Right ventricle myocardium inferior (tissue), 1 donor: ENCODE measurements at regions of chr18 and their contacts with region 1.

Region 1: DNA sequence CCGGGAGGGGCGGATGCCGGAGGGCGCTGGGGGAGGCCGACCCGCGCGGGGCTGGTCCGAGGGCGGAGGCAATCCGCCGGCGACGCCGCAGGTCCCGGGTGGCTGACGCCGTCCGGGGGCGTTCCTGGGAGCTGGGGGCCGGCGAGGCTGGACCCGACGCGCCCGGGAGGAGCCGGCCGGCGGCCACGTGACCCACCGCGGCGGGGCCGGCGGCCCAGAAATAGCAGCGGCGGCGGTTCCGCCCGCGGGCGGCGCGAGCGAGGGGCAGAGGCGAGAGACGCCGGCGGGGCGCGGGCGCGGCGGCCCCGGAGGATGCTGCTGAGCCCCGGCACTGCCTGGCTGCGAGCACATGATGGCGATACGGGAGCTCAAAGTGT is at the start of gene RAB31:
- DNase-seq: peak; percentile 91
- ATAC-seq: peak; percentile 94
- total RNA-seq, gene RAB31: 11.7 TPM

Region 2: DNA sequence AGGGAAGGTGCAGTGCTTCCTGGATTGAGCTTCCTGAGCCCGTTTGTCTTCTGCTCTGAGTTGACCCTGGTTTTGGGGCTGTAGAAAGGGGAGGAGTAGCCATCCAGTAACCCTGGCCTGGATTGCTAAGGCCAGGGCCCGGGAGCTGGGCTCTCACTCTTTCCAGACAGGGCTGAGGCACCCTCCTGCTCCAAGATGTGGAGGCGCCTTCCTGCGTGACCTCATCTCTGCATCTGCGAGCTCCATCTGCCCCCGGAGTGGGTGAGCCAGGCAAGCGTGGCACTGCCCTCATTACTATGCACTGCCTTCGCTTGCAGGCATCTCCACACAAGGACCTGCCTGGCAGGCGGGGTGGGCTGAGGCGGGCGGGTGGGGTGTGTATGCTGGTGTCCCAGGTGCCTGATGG is 58.0 kb after region 1 on chr18:
- intact Hi-C with region 1: loop called (anchors 10 kb)
- DNase-seq: no peak
- ATAC-seq: no peak

Region 3: DNA sequence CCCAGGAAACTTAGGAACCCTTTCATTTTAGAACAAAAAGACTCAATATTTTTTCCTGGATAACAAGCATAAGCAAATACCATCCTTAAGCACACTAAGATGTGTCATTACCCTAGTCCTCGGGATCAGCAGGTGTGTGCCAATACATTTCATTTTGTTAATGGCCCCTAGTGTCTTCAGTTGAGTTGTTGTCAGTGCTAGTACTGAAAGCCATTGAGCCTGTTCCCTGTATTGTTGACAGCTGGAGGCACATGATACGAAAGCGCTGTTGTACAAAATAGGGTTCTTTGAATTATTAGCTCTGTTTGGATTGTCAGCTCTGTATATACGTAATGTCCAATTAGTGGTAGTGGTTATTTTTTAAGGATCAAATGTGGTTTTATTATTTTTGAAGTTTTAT is 235.3 kb after region 1 on chr18:
- intact Hi-C with region 1: loop called (anchors 10 kb)
- DNase-seq: no peak
- ATAC-seq: peak; percentile 52